ENCODE measurements at regions of chr1 and their contacts with region 1.

Region 1: DNA sequence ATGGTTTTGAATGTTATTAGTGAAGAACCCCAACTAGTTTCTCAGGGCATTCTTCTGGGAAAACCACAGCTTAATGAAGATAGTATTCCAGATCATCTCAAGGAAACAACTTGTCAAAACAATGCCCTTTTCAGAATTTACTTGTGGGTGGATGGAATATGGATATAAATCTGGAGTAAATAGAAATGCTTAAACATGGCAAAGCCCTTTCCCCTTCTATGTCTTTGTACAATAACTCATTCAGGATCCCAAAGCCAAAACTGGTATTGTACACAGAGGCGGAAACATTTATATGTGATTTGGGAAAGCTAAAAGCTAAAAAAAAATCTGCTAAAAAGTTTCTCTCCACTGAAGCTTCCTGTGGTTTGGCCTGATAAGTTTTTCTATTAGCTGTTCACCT is 55.5 kb upstream of the RGS5 start:
- DNase-seq: peak; percentile 71
- ATAC-seq: peak; percentile 96
- H3K4me3 ChIP-seq: no peak overlapping the region
- H3K27ac ChIP-seq: peak overlapping the region; percentile 69
- H3K4me1 ChIP-seq: peaks cover 15% of the 10 kb centered on the region
- H3K27me3 ChIP-seq: no peaks in the 10 kb centered on the region
- CTCF ChIP-seq: no peak

Region 2: GRCh38 chr1:163195728-163196448 is 62.3 kb before region 1 on chr1:
- CTCF ChIA-PET with region 1: no interaction called
- POLR2A ChIA-PET with region 1: no interaction called
- intact Hi-C with region 1: loop called (anchors 5 kb)
- DNase-seq: no peak
- ATAC-seq: no peak
- H3K4me3 ChIP-seq: no peak overlapping the region
- H3K27ac ChIP-seq: no peak overlapping the region
- H3K4me1 ChIP-seq: no peaks in the 10 kb centered on the region
- H3K27me3 ChIP-seq: no peaks in the 10 kb centered on the region
- CTCF ChIP-seq: no peak

Region 3: GRCh38 chr1:163295949-163296348 is 37.8 kb after region 1 on chr1:
- CTCF ChIA-PET with region 1: no interaction called
- POLR2A ChIA-PET with region 1: no interaction called
- intact Hi-C with region 1: loop called (anchors 5 kb)
- DNase-seq: no peak
- ATAC-seq: no peak
- H3K4me3 ChIP-seq: no peak overlapping the region
- H3K27ac ChIP-seq: no peak overlapping the region
- H3K4me1 ChIP-seq: peaks cover 8% of the 10 kb centered on the region; the same call in 1 of the 2 replicates
- H3K27me3 ChIP-seq: no peaks in the 10 kb centered on the region
- CTCF ChIP-seq: no peak

Region 4: GRCh38 chr1:163321311-163322305 is 63.4 kb after region 1 on chr1 and contains the start of gene NUF2:
- CTCF ChIA-PET with region 1: no interaction called
- POLR2A ChIA-PET with region 1: no interaction called
- intact Hi-C with region 1: loop called (anchors 2 kb)
- DNase-seq: peak; percentile 99
- ATAC-seq: peak; percentile 92
- H3K4me3 ChIP-seq: peak within 1 kb of the TSS; percentile 92
- H3K27ac ChIP-seq: peak within 1 kb of the TSS; percentile 89
- H3K4me1 ChIP-seq: peaks cover 23% of the 10 kb centered on the region
- H3K27me3 ChIP-seq: no peaks in the 10 kb centered on the region
- CTCF ChIP-seq: no peak
- total RNA-seq, gene NUF2: 35.6 and 62.1 TPM in 2 replicates